ENCODE measurements at regions of chr18 and their contacts with region 1.

Region 1: DNA sequence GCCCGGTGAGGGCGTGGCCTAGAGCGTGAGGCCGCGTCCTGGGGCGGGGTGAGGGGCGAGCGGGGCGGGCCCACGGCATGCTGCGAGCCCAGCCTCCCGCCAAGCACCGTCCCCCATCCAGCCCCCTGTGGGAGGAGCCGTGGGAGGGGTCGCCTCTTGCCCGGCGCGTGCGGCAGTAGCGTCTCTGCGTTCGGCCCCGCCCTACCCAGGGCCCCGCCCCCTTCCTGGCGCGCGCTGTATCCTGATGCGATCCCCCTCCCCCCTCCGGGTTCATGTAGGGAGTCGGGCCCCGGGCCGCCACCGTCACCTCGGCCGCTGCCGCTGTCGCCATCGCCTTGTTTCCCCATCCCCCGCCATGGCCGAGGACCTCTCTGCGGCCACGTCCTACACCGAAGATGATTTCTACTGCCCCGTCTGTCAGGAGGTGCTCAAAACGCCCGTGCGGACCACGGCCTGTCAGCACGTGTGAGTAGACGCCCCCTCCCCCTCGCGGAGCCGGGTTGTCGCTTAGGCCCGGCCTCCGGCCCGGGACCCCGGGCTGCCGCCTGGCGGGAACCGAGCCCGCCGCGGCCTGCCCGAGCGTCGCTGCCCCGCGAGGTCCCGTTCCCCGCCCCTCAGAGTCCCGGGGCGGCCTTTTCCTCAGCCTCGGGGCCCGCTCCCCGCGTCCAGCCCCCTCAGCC is 888 bp downstream of the RNF138 start:
- DNase-seq: peak; percentile 95 to 100 (median 100)

Region 2: GRCh38 chr18:32018331-32019250 is 74.0 kb before region 1 on chr18 and contains the start of gene RNF125:
- intact Hi-C with region 1: loop called (anchors 5 kb)
- DNase-seq: peak; percentile 33 to 88 (median 75)

Region 3: GRCh38 chr18:32056613-32057358 is 35.8 kb before region 1 on chr18:
- intact Hi-C with region 1: no loop called
- DNase-seq: no peak